GM13977 (cell line): ENCODE measurements at regions of chr19 and their contacts with region 1.

Region 1: GRCh38 chr19:4738734-4739133 is 15.1 kb upstream of the DPP9 start:
- DNase-seq: no peak
- CTCF ChIP-seq: no peak

Region 2: GRCh38 chr19:4638828-4639530 is 99.8 kb before region 1 on chr19 and contains the start of gene TNFAIP8L1:
- in situ Hi-C with region 1: no loop called
- DNase-seq: peak; percentile 100
- CTCF ChIP-seq: no peak

Region 3: DNA sequence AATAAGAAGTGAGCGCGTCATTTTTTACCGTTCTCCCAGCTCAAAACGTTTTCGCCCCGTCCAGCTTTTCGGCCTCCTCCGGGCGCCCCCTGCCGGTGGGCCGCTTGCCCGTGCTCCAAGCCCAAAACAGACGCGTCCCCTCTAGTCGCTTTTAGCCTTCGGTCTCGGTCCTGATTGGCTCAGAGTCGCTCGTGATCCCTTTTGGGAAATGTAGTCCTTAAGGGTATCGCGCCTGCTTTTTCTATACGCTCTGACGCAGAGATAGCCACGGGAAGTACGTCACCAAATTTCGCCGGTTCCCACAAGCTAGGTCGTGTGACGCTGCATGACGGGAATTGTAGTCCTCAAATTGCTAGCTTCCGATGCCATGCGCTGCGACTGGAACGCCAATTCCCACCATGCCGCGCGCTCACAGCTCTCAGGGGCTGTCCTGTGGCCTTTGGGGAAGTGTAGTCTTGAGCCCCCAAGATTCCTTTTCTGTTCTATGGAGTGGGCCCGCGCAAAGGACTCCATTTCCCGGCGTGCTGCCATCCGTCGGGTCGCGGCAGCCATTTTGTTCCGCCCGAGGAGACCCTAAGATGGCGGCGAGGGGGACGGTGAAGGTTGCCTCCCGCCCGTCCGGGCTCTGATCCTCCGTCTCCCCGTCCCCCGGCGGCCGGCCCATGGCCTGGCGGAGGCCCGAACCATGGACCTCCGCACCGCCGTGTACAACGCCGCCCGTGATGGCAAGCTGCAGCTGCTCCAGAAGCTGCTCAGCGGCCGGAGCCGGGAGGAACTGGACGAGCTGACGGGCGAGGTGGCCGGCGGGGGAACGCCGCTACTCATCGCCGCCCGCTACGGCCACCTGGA is 52.7 kb after region 1 on chr19 and contains the start of gene FEM1A:
- in situ Hi-C with region 1: loop called (anchors 5 kb)
- DNase-seq: peak; percentile 99
- CTCF ChIP-seq: peak; percentile 99